ENCODE measurements at regions of chr1 and their contacts with region 1.

Region 1: DNA sequence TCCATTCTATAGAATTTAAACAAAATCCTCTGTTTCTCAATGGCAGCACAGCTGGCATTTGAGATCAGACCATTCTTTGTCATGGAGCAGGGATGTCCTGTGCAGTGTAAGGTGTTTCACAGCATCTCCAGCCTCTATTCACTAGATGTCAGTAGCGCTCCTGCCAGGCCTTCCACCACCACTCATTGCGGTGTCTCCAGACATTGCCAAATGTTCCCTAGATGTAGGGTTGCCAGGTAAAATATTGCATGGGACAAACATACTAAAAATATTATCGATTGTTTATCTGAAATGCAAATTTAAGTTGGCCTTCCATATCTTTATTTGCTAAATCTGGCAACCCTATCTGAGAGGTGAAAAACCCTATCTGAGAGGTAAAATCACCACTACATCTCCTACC is 11.7 kb downstream of the ITLN2 start:
- DNase-seq: no peak
- H3K4me3 ChIP-seq: no peak overlapping the region
- H3K4me3 Mint-ChIP-seq: no peak overlapping the region
- H3K27ac ChIP-seq: no peak overlapping the region
- H3K27ac Mint-ChIP-seq: no peak overlapping the region
- H3K4me1 ChIP-seq: no peaks in the 10 kb centered on the region
- H3K4me1 Mint-ChIP-seq: peaks cover 4% of the 10 kb centered on the region
- H3K27me3 ChIP-seq: no peaks in the 10 kb centered on the region
- H3K27me3 Mint-ChIP-seq: peaks cover 4 to 7% (median 7%) of the 10 kb centered on the region in 3 donors
- CTCF ChIP-seq: no peak

Region 2: GRCh38 chr1:160837558-160838205 is 105.2 kb before region 1 on chr1:
- intact Hi-C with region 1: no loop called
- DNase-seq: peak; percentile 27 to 51 (median 30)
- H3K4me3 ChIP-seq: no peak overlapping the region
- H3K4me3 Mint-ChIP-seq: no peak overlapping the region
- H3K27ac ChIP-seq: peak overlapping the region in 1 of 2 donors; percentile 54
- H3K27ac Mint-ChIP-seq: peak overlapping the region in 4 of 7 donors; percentile 18 to 84 (median 68)
- H3K4me1 ChIP-seq: peaks cover 31 to 38% of the 10 kb centered on the region in 2 donors
- H3K4me1 Mint-ChIP-seq: peaks cover 39% of the 10 kb centered on the region
- H3K27me3 ChIP-seq: no peaks in the 10 kb centered on the region
- H3K27me3 Mint-ChIP-seq: peaks cover 0 to 4% (median 0%) of the 10 kb centered on the region in 3 donors
- CTCF ChIP-seq: peak; percentile 27

Region 3: GRCh38 chr1:160884579-160884978 is 58.3 kb before region 1 on chr1:
- intact Hi-C with region 1: loop called in 1 of 2 experiments (anchors 10 kb)
- DNase-seq: peak in 1 of 3 donors; percentile 22
- H3K4me3 ChIP-seq: no peak overlapping the region
- H3K4me3 Mint-ChIP-seq: no peak overlapping the region
- H3K27ac ChIP-seq: peak overlapping the region; percentile 49 to 62
- H3K27ac Mint-ChIP-seq: peak overlapping the region; percentile 6 to 73 (median 50)
- H3K4me1 ChIP-seq: peaks cover 61 to 74% of the 10 kb centered on the region in 2 donors
- H3K4me1 Mint-ChIP-seq: peaks cover 64% of the 10 kb centered on the region
- H3K27me3 ChIP-seq: no peaks in the 10 kb centered on the region
- H3K27me3 Mint-ChIP-seq: peaks cover 2 to 3% (median 2%) of the 10 kb centered on the region in 3 donors
- CTCF ChIP-seq: peak; percentile 14

Measured in CD14-positive monocyte (primary cell).